Panc1 (cell line): ENCODE measurements at regions of chr1 and their contacts with region 1.

Region 1: DNA sequence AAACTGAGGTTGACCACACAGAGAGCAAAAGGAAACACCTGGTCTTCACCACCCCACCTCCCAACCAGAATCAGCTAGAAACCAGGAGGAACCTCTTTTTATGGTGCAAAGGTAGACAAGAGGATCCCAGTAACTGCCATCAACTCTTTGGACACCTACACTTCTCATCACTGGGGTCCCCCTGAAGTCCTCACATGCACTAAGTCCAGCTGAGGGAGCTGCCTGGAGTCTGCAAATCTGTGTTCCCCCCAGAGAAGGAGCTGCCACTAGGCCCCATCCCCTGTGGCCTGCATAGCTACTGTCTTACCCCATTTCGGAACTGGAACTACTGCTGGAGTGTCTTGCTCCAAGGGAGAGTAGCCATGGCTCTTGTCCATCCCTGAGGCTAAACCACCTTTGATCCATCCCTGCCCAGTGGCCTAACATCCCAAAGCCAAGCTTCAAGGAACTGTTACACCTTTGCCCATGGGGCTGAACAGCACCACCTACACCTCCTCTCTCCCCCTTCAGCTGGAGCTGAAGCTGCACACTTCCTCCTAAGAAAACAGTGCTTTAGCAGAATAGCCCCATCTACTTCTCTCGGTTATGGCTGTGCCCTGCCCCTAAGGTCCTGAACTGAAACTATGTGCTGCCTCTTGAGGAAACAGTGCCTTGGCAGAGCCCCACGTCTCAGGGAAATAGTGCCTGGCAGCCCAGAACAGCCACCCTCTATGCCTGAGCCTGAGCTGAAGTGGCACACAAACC is 85.4 kb upstream of the CD53 start:
- DNase-seq: no peak
- ATAC-seq: no peak
- H3K4me3 ChIP-seq: no peak overlapping the region
- H3K27ac ChIP-seq: no peak overlapping the region
- H3K4me1 ChIP-seq: no peaks in the 10 kb centered on the region
- H3K27me3 ChIP-seq: no peaks in the 10 kb centered on the region
- CTCF ChIP-seq: no peak

Region 2: DNA sequence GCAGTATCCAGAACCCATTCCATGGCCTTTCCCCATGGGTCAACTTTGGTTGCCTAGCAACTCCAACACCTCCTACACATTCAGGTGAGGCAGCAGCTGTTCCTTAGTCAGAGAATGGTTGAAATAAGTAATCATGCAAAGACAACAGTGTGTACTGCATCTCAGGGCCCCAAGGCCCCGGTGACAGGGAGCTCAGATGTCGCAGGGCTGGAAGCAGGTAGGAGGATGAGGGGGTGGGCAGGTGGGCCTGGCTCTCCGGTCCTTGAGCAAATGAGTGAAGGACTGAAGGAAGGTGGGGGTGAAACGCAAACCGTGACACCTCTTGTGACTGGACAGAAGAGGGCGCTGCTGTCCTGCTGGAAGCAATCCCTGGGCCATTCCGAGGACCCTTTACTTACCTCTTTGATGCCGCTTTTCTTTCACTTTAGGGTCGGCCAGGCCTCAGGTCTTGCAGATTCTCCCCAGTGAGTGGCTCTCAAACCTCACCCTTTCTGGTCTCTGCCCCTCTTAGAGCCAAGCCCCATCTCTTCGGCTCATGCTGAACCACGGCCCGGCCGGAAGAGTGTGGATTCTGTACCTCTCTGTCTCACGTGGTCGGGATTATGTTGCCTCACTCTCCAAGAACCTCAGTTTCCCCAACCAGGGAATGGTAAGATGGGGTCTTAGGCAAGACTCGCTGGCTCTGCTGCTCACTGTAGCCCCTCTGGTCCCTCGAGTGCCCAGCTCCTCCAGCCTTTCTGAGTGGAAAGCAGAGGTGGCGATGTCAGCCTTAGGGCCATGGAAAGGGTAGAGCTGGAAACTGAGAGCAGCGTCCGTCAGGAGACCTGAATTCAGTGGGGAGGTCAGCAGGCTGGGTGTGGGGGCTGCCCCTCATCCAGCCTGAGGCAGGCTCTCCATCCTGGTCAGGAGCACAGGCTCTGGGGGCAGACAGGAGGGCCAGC is 262.9 kb before region 1 on chr1:
- CTCF ChIA-PET with region 1: no interaction called
- POLR2A ChIA-PET with region 1: no interaction called
- in situ Hi-C with region 1: no loop called
- intact Hi-C with region 1: loop called (anchors 5 kb)
- DNase-seq: peak; percentile 20
- ATAC-seq: peak; percentile 81
- H3K4me3 ChIP-seq: no peak overlapping the region
- H3K27ac ChIP-seq: no peak overlapping the region
- H3K4me1 ChIP-seq: no peaks in the 10 kb centered on the region
- H3K27me3 ChIP-seq: no peaks in the 10 kb centered on the region; the same call in 1 of the 2 replicates
- CTCF ChIP-seq: peak; percentile 83

Region 3: DNA sequence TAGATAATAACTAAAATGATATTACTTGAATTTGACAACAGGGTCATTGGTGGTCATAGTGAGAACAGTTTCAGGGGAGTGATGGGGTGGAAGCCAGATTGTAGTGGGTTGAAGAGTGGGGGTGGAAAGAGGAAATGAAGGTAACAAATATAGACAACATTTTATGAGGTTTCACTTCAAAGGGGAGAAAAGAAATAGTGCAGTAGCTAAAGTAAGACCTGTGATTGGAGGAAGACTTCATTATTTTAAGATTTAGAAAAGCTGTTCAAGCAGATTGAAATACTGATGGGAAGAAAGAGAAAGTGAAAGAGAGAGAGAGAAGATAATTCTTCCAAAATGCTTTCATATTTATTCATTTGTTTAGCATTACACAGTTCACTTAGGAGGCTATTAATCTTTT is 60.7 kb before region 1 on chr1:
- CTCF ChIA-PET with region 1: no interaction called
- POLR2A ChIA-PET with region 1: no interaction called
- in situ Hi-C with region 1: no loop called
- intact Hi-C with region 1: no loop called
- DNase-seq: no peak
- ATAC-seq: no peak
- H3K4me3 ChIP-seq: no peak overlapping the region
- H3K27ac ChIP-seq: no peak overlapping the region
- H3K4me1 ChIP-seq: no peaks in the 10 kb centered on the region
- H3K27me3 ChIP-seq: peaks cover 3% of the 10 kb centered on the region; the same call in 1 of the 2 replicates
- CTCF ChIP-seq: no peak

Region 4: DNA sequence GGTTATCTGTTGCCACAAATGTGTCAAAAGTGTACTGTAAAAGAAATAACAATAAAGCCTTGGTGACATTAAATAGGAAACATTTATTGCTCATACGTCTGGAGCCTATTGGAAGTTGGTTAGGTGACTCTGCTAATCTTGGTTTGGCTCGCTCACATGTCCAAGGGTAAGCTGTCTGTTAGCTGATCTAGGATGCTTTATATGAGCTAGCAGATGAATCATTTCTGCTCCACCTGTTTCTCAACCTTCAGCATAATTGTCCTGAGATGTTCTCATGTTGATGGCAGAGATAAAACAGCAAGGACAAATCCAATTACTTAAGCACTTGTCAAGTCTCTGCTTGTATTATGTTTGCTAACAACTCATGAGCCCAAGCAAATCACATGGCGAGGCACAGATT is 29.4 kb after region 1 on chr1:
- CTCF ChIA-PET with region 1: no interaction called
- POLR2A ChIA-PET with region 1: no interaction called
- in situ Hi-C with region 1: no loop called
- intact Hi-C with region 1: no loop called
- DNase-seq: no peak
- ATAC-seq: no peak
- H3K4me3 ChIP-seq: no peak overlapping the region
- H3K27ac ChIP-seq: no peak overlapping the region
- H3K4me1 ChIP-seq: no peaks in the 10 kb centered on the region
- H3K27me3 ChIP-seq: no peaks in the 10 kb centered on the region; the same call in 1 of the 2 replicates
- CTCF ChIP-seq: no peak